Posterior vena cava (tissue), 2 donors: ENCODE measurements at regions of chr5 and their contacts with region 1.

Region 1: DNA sequence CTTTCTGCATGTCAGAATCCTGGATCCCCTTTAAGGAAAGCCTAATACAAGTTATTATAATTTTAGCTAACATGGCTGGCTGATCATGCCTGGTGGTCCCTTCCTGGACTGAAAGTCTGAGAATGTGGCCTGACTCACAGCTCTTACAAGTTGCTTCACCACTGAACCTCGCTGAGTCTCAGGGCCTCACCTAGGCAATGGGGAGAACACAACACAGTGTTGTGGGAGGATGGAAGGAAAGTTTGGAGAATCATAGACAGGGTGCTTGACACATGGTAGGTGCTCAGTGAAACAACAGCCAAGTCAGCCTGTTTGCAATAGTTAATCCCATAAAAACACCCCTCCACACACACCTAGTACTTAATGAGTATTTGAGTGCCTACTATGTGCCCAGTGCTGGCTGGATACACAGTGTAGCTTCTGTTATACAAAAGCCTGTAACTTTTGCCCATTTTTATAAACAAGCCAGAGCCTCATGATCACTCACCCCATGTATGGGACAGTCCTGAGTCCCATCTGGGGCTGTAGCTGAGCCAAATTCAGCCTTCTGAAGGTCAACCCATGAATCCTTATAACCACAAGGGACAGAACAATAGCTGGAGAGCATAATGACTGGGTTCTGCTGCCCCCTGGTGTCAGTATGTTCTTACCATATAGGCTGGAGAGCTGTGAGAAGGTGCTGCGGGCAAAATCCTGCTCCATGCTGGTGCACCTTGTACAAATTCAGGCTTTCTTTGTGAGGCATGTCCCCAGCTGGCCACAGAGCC is 3.9 kb downstream of the ACSL6 start:
- DNase-seq: peak; percentile 86

Region 2: GRCh38 chr5:131589510-131590348 is 417.9 kb before region 1 on chr5:
- intact Hi-C with region 1: loop called in 1 of 2 experiments (anchors 5 kb)
- DNase-seq: no peak

Region 3: DNA sequence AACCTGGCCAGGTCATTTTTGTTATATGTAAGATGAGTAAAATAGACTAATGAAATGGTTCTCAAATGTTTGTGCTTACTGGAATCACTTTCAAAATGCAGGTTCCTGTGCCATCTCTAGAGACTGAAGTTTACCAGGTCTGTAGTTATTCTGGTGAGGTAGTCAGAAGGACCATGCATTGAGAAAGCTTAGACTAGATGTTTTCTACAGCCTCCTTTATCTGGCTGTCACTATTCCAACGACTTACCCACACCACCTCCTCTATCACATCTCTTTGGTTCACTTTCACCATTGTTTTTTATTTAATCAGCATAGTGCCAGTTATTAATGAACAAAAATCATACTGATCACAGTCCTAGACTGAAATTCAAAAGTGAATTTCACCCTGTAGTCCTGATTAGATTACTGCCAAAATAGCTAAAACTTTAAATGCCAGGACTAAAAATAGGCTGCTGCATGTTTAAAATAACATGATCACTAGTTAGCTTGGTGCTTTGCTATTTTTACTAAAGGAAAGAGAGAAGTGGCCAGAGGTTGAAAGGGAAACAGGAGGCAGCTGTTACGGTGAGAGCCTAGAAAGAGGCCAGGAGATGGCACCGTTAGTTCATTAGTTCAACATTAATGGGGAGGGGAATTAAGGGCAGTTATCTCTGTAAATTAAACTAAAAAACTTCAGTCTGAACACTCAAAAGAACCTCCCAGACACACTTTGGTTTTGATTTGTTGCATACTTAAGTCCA is 196.9 kb before region 1 on chr5:
- intact Hi-C with region 1: loop called (anchors 5 to 10 kb)
- DNase-seq: no peak